ENCODE measurements at regions of chr15 and their contacts with region 1.

Region 1: DNA sequence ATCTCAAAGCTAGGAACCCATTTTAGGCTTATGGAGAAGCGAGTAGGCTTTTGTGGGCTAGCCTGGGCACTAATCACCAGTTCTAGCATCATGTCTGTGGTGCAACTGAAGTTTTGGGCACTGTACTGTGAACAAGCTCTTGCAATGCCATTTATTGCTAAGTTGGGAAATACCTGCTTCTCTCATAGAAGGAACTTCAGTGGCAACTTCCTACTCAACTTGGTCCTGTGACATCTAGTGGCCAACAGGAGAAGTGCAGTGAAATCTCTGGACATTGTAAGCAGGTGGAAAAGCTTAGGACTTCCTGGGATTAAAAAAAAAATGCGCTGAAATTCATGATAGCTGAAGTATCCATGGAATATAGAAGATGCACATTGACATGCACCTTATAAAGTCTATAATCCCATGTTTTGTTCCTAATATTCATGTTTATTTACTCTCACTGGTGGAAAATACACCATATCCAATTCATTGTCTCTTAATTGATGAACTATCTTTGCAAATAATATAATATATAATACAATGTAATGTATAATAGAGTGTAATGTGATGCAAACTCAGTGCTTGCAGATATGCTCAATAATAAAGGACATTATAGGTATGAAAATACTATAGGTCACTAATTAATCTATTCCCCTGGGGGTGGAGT is 6.5 kb upstream of the ALDH1A3 start:
- DNase-seq: peak in 1 of 2 donors; percentile 82
- H3K4me3 ChIP-seq: no peak overlapping the region
- H3K27ac ChIP-seq: no peak overlapping the region
- H3K4me1 ChIP-seq: no peaks in the 10 kb centered on the region
- H3K27me3 ChIP-seq: no peaks in the 10 kb centered on the region
- CTCF ChIP-seq: peak; percentile 87 to 90 (median 89)

Region 2: GRCh38 chr15:100627789-100628395 is 245.3 kb before region 1 on chr15:
- intact Hi-C with region 1: loop called (anchors 1 kb)
- DNase-seq: peak in 1 of 2 donors; percentile 78
- H3K4me3 ChIP-seq: no peak overlapping the region
- H3K27ac ChIP-seq: no peak overlapping the region
- H3K4me1 ChIP-seq: no peaks in the 10 kb centered on the region
- H3K27me3 ChIP-seq: no peaks in the 10 kb centered on the region
- CTCF ChIP-seq: peak; percentile 65 to 79 (median 70)

Region 3: DNA sequence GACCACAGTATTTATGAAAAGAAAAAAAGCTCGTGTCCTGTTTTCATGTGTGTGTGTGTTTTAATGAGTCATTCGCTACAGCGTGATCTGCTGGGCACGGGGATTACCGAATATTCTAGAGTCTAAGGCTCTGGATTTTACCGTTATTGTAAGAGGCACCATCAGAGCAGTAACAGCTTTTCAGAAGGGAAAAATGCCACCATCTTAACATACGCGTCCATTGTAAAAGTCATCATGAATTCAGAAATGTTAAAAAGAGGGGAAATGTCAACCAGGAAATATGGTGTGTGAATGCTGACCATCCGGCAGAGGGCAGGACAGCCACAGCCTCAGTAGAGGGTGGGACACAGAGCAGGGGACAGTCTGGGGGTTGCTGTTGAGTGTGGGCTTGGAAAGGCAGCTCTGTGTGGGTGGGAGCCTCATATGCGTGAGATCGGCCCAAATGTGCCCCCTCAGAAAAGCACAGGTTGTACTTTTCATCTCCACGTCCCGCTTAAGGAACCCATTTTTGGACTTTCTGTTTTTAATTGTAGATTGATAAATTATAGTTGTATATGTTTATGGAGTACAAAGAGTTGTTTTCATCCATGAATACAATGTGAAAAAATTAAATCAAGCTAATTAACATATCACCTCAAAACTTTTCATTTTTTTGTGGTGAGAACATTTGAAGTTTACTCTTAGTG is 201.2 kb before region 1 on chr15:
- intact Hi-C with region 1: loop called (anchors 5 kb)
- DNase-seq: no peak
- H3K4me3 ChIP-seq: no peak overlapping the region
- H3K27ac ChIP-seq: no peak overlapping the region
- H3K4me1 ChIP-seq: no peaks in the 10 kb centered on the region
- H3K27me3 ChIP-seq: no peaks in the 10 kb centered on the region
- CTCF ChIP-seq: peak; percentile 16 to 50 (median 25)